Left ventricle myocardium inferior (tissue), 1 donor: ENCODE measurements at regions of chr3 and their contacts with region 1.

Region 1: GRCh38 chr3:184017672-184018423 is at the start of gene ABCC5:
- DNase-seq: peak; percentile 94
- H3K4me3 ChIP-seq: peak within 1 kb of the TSS; percentile 96
- H3K27ac ChIP-seq: peak within 1 kb of the TSS; percentile 93
- H3K4me1 ChIP-seq: peaks cover 43% of the 10 kb centered on the region
- H3K27me3 ChIP-seq: no peaks in the 10 kb centered on the region
- CTCF ChIP-seq: peak; percentile 59
- total RNA-seq, gene ABCC5: 49.4 TPM

Region 2: DNA sequence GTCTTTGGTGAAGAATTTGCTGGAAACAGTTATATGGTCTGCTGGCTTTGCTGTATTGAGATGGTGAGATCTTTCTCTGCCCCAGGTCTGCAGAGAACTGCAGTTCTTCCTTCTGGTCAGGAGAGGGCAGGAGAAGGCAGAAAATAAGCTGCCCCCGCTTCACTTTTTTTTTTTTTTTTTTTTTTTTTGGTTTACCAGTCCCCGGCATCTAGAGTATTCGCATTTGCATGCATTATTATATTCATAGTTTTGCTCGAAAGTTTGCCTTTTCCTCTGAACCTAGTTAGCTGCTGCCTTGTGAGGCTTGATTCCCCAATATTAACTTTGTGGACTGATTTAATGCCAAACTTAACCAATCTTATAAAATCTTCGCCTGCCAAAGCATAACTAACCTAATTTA is 122.6 kb before region 1 on chr3:
- intact Hi-C with region 1: loop called (anchors 10 kb)
- DNase-seq: no peak
- H3K4me3 ChIP-seq: no peak overlapping the region
- H3K27ac ChIP-seq: no peak overlapping the region
- H3K4me1 ChIP-seq: peaks cover 2% of the 10 kb centered on the region
- H3K27me3 ChIP-seq: peaks cover 63% of the 10 kb centered on the region
- CTCF ChIP-seq: peak; percentile 86

Region 3: DNA sequence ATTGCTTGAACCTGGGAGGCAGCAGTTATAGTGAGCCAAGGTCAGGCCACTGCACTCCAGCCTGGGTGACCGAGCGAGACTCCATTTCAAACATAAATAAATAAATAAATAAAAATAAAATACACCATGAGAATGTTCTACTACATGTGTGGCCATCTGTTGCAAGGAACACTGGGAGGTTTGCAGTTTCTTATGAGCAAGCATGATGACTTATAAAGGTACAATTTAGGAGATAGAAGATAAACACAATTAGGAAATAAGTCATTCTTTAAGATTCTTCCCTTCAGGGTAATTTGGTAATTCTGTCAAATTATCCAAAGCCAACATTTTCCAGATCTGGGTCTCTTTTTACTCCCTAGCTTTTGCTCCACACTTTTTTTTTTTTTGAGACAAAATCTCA is 48.4 kb after region 1 on chr3:
- intact Hi-C with region 1: no loop called
- DNase-seq: no peak
- H3K4me3 ChIP-seq: no peak overlapping the region
- H3K27ac ChIP-seq: no peak overlapping the region
- H3K4me1 ChIP-seq: no peaks in the 10 kb centered on the region
- H3K27me3 ChIP-seq: peaks cover 16% of the 10 kb centered on the region
- CTCF ChIP-seq: no peak

Region 4: GRCh38 chr3:184099806-184100686 is 82.2 kb after region 1 on chr3:
- intact Hi-C with region 1: no loop called
- DNase-seq: no peak
- H3K4me3 ChIP-seq: no peak overlapping the region
- H3K27ac ChIP-seq: no peak overlapping the region
- H3K4me1 ChIP-seq: no peaks in the 10 kb centered on the region
- H3K27me3 ChIP-seq: peaks cover 21% of the 10 kb centered on the region
- CTCF ChIP-seq: no peak

Region 5: DNA sequence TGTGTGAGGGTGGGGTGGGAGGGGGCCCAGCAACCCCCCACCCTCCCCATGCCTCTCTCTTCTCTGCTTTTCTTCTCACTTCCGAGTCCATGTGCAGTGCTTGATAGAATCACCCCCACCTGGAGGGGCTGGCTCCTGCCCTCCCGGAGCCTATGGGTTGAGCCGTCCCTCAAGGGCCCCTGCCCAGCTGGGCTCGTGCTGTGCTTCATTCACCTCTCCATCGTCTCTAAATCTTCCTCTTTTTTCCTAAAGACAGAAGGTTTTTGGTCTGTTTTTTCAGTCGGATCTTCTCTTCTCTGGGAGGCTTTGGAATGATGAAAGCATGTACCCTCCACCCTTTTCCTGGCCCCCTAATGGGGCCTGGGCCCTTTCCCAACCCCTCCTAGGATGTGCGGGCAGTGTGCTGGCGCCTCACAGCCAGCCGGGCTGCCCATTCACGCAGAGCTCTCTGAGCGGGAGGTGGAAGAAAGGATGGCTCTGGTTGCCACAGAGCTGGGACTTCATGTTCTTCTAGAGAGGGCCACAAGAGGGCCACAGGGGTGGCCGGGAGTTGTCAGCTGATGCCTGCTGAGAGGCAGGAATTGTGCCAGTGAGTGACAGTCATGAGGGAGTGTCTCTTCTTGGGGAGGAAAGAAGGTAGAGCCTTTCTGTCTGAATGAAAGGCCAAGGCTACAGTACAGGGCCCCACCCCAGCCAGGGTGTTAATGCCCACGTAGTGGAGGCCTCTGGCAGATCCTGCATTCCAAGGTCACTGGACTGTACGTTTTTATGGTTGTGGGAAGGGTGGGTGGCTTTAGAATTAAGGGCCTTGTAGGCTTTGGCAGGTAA is 327.7 kb after region 1 on chr3:
- intact Hi-C with region 1: no loop called
- DNase-seq: peak; percentile 55
- H3K4me3 ChIP-seq: no peak overlapping the region
- H3K27ac ChIP-seq: peak overlapping the region; percentile 61
- H3K4me1 ChIP-seq: peaks cover 16% of the 10 kb centered on the region
- H3K27me3 ChIP-seq: no peaks in the 10 kb centered on the region
- CTCF ChIP-seq: peak; percentile 56